Ovary (tissue), 10 donors: ENCODE measurements at regions of chr16 and their contacts with region 1.

Region 1: DNA sequence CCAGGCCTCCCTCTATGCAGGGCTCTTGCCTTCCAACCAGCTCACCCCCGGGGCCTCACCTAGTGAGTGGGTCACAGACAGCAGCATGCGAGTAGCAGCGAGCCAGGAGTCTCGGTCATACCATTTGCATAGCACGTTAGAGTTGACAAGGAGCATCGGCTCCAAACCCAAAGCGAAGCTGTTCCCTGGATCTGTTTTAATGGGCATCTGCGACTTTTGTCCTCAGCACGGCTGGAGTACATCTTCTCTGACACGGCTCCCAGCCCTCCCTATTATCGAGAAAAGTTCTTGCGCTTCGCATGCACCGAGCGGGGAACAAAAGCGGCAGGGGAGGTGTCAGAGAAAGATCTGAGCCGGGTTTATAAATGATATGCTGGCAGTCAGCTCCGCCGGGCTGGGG is 253.3 kb downstream of the MAF start:
- DNase-seq: no peak
- H3K4me3 ChIP-seq: no peak overlapping the region
- H3K27ac ChIP-seq: no peak overlapping the region
- H3K4me1 ChIP-seq: peaks cover 1% of the 10 kb centered on the region
- H3K27me3 ChIP-seq: no peaks in the 10 kb centered on the region
- CTCF ChIP-seq: no peak
- EP300 ChIP-seq: no peak
- POLR2A ChIP-seq: no peak

Region 2: DNA sequence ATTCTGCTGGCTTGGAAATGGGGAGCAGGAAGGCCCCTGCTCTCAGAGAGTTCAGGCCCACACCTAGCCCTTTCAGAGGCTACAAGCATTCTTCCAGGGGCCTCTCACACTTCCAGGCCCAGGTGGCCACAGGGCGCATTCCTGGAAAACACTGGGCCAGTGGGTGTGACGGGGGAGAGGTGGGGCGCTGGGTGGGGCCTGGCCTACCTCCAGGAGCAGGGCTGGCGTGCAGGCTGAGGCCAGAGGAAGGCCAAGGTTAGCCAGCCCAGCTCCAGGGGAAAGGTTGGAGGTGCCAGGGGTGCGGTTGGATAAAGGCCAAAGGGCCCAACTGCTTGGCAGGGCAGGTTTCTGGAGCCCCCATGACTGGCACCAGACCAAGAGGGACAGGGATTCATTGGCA is 55.1 kb after region 1 on chr16:
- intact Hi-C with region 1: loop called in 1 of 4 experiments (anchors 10 kb)
- DNase-seq: peak in 1 of 5 donors; percentile 19
- H3K4me3 ChIP-seq: no peak overlapping the region
- H3K27ac ChIP-seq: no peak overlapping the region
- H3K4me1 ChIP-seq: peaks cover 2% of the 10 kb centered on the region
- H3K27me3 ChIP-seq: no peaks in the 10 kb centered on the region
- CTCF ChIP-seq: no peak
- EP300 ChIP-seq: no peak
- POLR2A ChIP-seq: no peak

Region 3: GRCh38 chr16:79728039-79728922 is 381.0 kb after region 1 on chr16:
- intact Hi-C with region 1: no loop called
- DNase-seq: no peak
- H3K4me3 ChIP-seq: no peak overlapping the region
- H3K27ac ChIP-seq: no peak overlapping the region
- H3K4me1 ChIP-seq: no peaks in the 10 kb centered on the region
- H3K27me3 ChIP-seq: no peaks in the 10 kb centered on the region
- CTCF ChIP-seq: no peak
- EP300 ChIP-seq: no peak
- POLR2A ChIP-seq: no peak

Region 4: DNA sequence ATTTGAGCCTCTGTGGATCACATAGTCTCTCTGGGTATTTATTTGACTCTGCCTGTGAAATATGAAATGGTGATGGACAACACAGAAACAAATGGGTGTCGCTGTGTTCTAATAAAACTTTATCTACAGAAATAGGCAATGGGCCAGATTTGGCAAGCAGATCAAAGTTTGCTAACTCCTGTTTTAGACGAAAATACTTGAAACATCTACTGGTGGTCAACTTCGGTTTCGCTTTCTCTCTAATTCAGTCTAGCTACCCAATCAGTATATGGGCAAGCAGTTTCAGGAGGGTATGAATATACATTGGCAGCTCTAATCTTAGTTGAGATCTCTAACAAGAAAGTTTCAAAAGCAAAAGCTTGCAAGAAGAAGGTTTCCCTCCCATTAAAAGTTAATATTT is 1133.4 kb after region 1 on chr16:
- intact Hi-C with region 1: no loop called
- DNase-seq: no peak
- H3K4me3 ChIP-seq: no peak overlapping the region
- H3K27ac ChIP-seq: no peak overlapping the region
- H3K4me1 ChIP-seq: no peaks in the 10 kb centered on the region
- H3K27me3 ChIP-seq: no peaks in the 10 kb centered on the region
- CTCF ChIP-seq: no peak
- EP300 ChIP-seq: no peak
- POLR2A ChIP-seq: no peak